ENCODE measurements at regions of chr5 and their contacts with region 1.

Region 1: GRCh38 chr5:73215891-73216610 is 43.1 kb downstream of the TMEM174 start:
- DNase-seq: no peak
- H3K4me3 ChIP-seq: peak overlapping the region; percentile 59
- CTCF ChIP-seq: peak; percentile 92

Region 2: GRCh38 chr5:72906806-72907205 is 309.2 kb before region 1 on chr5:
- CTCF ChIA-PET with region 1: no interaction called
- POLR2A ChIA-PET with region 1: no interaction called
- DNase-seq: no peak
- H3K4me3 ChIP-seq: no peak overlapping the region
- CTCF ChIP-seq: no peak

Region 3: GRCh38 chr5:73088026-73088425 is 128.0 kb before region 1 on chr5:
- CTCF ChIA-PET with region 1: interaction called, 48 read pairs
- POLR2A ChIA-PET with region 1: interaction called, 4 read pairs
- DNase-seq: no peak
- H3K4me3 ChIP-seq: no peak overlapping the region
- CTCF ChIP-seq: no peak

Region 4: DNA sequence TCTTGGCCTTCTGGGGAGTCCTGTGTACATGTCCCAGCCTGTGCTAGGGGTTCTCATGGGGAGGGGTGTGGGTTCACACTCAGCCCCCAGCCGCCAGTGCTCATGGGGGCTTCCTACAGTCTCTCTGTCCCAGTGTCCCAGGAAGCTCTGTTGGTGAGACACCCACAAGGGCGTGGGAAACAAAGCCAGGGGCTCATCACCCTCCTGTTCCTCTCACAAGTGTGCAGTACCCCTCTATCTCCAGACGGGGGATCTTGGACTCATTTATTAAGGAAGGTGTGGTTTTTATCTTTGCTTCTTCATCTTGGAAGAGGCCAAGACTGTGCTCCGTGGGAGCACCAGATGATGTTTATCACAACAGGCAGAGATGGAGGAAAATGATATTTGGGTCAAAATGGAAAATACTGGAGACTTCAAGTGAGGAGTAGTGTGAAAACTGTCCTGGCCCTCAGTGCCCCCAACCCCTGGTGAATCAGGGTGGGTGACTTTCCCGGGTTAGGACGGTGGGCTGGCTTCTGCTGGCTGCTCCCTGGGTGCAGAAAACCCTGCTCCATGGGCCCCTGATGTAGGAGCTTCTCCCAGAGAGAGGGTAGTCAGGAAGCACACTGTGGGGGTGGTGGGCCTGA is 80.5 kb before region 1 on chr5:
- CTCF ChIA-PET with region 1: interaction called, 59 read pairs
- POLR2A ChIA-PET with region 1: no interaction called
- DNase-seq: no peak
- H3K4me3 ChIP-seq: no peak overlapping the region
- CTCF ChIP-seq: peak; percentile 54

Region 5: DNA sequence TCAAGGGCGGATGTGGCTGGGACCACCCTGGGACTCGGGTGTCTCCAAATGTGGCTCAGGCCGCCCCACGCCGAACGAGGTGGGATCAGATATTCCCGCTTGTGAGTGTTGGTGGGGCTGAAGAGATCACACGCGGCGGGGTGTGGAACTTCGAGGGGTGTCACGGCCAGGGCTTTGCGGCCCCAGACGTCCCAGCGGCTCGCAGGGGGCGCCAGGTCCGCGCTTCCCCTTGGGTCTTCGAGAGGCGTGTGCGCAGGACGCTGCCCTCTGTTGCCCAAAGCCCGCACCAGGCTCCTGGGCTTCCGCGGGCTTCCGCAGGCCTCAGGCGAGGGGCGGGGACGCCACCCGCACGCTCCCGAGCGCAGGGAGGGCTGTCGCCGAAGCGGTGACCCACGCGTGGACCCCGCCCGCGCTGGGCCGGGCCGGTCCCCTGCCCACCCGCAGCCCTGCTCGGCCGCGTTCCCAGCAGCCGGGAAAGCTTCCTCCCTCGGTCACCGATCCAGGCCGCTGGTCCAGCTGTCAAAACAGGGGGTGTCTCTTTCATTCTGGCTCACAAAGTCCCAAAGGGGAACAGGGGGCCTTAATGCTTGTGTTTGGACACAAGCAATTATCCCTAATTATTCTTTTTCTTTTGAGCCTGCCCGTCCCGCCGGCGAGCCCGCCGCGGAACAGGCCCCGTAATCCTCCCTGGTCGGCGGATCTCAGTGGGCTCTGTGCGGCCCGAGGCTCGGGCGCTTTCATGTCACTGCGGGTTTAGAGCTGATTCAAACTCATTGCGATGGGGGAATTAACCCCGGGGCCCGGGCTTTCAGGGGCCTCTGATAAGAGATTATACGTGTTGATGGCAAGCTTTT is 17.5 kb after region 1 on chr5:
- CTCF ChIA-PET with region 1: interaction called, 193 read pairs
- POLR2A ChIA-PET with region 1: interaction called, 5 read pairs
- DNase-seq: no peak
- H3K4me3 ChIP-seq: no peak overlapping the region
- CTCF ChIP-seq: peak; percentile 34

Region 6: DNA sequence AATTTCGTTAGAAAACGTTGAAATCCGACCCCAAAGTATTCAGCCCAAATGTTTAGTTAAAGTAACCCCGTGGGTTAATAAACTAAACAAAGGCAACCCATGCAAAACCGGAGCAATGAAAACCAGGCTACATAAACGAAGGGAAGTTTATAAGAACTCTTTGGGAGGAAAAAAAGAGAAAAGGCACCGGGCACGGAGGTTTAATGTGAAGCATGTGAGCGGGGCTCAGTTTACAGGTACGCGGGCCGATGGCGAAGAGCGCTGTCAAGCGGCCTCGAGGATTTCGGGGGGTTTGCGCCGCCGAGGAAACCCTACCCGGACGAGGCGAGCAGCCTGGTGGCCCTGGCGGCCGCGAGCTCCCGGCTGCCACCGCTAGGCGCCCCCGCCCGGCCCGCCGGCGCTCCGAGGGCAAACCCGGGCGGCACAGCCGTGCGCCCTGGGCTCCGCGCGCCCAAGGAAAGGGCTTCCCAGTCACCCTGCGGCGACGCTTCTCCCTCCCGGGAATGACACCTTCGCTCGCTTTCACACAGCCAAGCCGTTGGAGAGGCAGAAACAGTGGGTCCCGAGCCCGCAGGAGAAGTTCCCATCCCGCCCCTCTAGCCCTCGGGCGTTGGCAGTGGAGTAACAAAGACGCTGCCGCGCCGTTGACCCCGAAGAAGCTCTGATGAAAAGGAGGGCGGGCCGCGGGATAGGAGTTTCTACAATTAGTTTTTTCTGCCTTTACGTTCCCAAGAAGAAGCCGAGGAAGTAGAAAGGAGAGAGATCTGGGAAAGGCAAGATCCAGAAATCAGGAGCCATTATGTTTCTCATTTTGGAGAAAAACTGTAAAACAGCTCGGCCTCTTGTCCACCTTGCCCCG is 83.0 kb after region 1 on chr5:
- CTCF ChIA-PET with region 1: interaction called, 13 read pairs
- POLR2A ChIA-PET with region 1: no interaction called
- DNase-seq: no peak
- H3K4me3 ChIP-seq: peak overlapping the region; percentile 45
- CTCF ChIP-seq: no peak

Region 7: DNA sequence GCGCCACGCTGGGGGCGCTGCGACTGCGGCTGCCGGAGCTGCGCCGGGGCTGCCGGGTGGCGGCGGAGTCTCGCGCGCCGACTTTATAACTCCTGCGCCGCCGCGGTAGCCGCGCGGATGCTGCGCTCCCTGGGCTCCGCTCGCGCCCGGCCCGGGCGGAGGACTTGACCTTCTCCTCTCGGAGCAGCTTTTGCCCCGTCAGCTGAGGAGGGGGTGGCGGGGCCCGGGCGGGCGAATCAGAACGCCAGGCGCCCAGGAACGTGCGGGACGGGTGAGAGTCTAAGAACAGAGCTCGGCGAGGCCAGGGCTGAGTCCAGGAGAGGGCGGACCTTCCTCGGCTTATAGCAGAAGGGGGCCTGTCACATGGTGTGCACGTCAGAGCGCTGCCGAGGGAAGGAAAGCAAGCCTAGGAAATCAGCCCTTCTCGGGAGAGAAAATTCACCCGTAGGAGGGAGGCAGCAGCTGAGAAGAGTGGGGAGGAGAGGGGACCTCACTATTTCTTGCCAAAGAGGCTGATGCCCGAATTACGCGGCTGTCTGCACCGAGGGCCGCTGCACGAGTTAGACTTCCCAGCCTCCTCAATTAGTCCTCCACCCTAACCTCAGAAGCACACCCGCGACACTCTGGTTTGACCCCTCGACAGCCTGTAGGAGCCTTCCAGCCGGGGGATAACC is 232.5 kb after region 1 on chr5 and contains the start of gene FOXD1:
- CTCF ChIA-PET with region 1: interaction called, 69 read pairs
- POLR2A ChIA-PET with region 1: interaction called, 13 read pairs
- DNase-seq: peak; percentile 91
- H3K4me3 ChIP-seq: peak within 1 kb of the TSS; percentile 82
- CTCF ChIP-seq: peak; percentile 26